Activated CD4-positive, alpha-beta memory T cell treated with anti-CD3 and anti-CD28 coated beads, Interleukin-2, amount 10 ng/mL, durations not matched to agents 7 days and 5 days (primary cell): ENCODE measurements at regions of chr11 and their contacts with region 1.

Region 1: DNA sequence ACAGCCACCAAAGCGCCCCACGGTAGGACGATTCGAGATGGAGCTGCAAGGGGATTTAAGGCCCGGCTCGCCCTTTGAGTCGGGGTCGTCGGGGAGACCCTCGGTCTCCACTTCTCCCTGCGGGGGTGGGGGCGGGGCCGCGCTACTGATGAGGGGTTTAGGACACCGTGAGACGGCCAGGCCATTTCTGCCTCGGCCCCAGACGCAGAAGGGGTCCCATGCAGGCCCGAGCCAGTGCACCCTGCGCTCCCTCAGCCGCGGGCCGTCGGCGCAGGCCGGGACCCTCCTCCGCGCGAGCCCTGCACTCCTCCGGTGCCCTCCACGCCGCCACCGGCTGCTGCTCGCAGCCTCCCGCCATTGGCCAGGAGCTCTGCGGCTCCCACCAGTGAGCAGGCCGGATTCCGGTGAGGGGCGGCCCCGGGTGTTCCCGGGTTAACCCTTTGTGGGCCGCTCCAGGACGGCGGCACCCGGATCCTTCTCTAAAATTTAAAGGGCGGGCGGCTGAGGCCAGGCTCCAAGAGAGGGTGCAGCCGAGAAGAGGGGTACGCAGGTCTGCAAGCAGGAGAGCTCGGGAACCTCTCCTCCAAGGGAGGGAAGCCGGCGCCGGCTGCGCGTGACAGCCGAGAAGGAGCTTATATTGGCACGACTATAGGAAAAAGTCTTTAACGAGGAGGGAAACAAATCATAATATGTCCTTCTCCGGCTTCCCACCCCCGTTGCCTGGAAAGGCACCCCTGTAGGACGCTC is 18.0 kb downstream of the CREB3L1 start:
- DNase-seq: peak; percentile 70
- H3K4me3 Mint-ChIP-seq: peak overlapping the region; percentile 65
- H3K27ac Mint-ChIP-seq: no peak overlapping the region
- H3K4me1 Mint-ChIP-seq: peaks cover 22% of the 10 kb centered on the region
- H3K27me3 Mint-ChIP-seq: peaks cover 30% of the 10 kb centered on the region

Region 2: GRCh38 chr11:46308631-46309419 is 13.3 kb after region 1 on chr11:
- CTCF ChIA-PET with region 1: interaction called, 18 read pairs
- POLR2A ChIA-PET with region 1: interaction called, 4 read pairs
- DNase-seq: peak; percentile 75
- H3K4me3 Mint-ChIP-seq: no peak overlapping the region
- H3K27ac Mint-ChIP-seq: no peak overlapping the region
- H3K4me1 Mint-ChIP-seq: peaks cover 15% of the 10 kb centered on the region
- H3K27me3 Mint-ChIP-seq: no peaks in the 10 kb centered on the region